MCF 10A (cell line): ENCODE measurements at regions of chr1 and their contacts with region 1.

Region 1: GRCh38 chr1:146036965-146037646 is 15.6 kb upstream of the HJV start:
- DNase-seq: peak; percentile 95
- H3K4me3 Mint-ChIP-seq: peak overlapping the region; percentile 99
- H3K27ac Mint-ChIP-seq: peak overlapping the region; percentile 98
- H3K4me1 Mint-ChIP-seq: peaks cover 11% of the 10 kb centered on the region
- H3K27me3 Mint-ChIP-seq: no peaks in the 10 kb centered on the region
- CTCF ChIP-seq: no peak

Region 2: GRCh38 chr1:145751491-145752037 is 285.5 kb before region 1 on chr1:
- CTCF ChIA-PET with region 1: no interaction called
- POLR2A ChIA-PET with region 1: no interaction called
- intact Hi-C with region 1: no loop called
- DNase-seq: peak; percentile 50
- H3K4me3 Mint-ChIP-seq: no peak overlapping the region
- H3K27ac Mint-ChIP-seq: peak overlapping the region; percentile 87
- H3K4me1 Mint-ChIP-seq: peaks cover 14% of the 10 kb centered on the region
- H3K27me3 Mint-ChIP-seq: no peaks in the 10 kb centered on the region
- CTCF ChIP-seq: no peak

Region 3: GRCh38 chr1:145918144-145918992 is 118.7 kb before region 1 on chr1 and contains the start of gene PEX11B:
- CTCF ChIA-PET with region 1: no interaction called
- POLR2A ChIA-PET with region 1: interaction called, 15 read pairs
- intact Hi-C with region 1: no loop called
- DNase-seq: peak; percentile 92
- H3K4me3 Mint-ChIP-seq: peak within 1 kb of the TSS; percentile 94
- H3K27ac Mint-ChIP-seq: peak within 1 kb of the TSS; percentile 99
- H3K4me1 Mint-ChIP-seq: peaks cover 43% of the 10 kb centered on the region
- H3K27me3 Mint-ChIP-seq: no peaks in the 10 kb centered on the region
- CTCF ChIP-seq: no peak
- total RNA-seq, gene PEX11B: 35.5 and 36.2 TPM in 2 replicates

Region 4: DNA sequence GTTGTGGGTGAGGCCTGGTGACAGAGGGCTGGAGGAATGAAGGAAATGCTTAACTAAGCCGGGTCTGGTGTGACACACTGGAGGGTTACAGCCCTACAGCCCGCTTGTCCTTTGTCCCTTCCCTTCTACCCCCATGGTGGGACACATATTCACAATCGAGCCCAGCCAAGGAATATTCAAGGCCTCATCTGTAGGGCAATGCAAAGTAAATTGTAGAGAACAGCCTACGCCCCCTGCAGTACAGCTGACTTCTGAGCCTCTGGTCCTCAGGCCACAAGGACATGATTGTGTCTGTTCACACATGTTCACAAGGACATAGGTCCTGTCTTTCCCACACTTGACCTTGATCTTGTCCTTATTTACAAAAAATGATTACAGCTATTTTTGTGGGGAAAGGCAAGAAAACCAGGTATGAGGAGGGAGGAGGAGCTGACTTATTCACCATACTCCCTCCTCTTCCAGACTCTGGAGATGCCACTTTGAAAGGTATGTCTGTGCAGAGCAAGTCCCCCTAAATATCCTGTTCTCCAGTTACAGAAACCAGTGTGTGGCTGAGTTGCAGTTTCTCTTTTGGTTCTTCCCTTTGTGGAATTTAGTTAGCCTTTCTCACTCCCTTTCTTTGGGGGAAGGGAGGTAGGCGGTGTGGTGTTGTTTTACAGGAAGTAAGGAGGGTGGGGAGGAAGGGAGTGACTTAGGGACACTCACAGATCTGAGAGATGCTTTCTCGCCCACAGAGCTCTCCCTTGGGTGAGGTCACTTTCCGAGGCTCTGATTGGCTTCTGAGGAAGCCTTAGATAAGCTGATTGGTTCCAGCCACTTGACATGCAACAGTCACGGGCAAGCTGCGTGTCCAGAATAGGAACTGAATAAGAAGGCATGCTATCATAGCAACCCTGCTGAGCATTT is 58.0 kb before region 1 on chr1:
- CTCF ChIA-PET with region 1: interaction called, 21 read pairs
- POLR2A ChIA-PET with region 1: interaction called, 61 read pairs
- intact Hi-C with region 1: no loop called
- DNase-seq: peak; percentile 100
- H3K4me3 Mint-ChIP-seq: no peak overlapping the region
- H3K27ac Mint-ChIP-seq: no peak overlapping the region
- H3K4me1 Mint-ChIP-seq: peaks cover 11% of the 10 kb centered on the region
- H3K27me3 Mint-ChIP-seq: no peaks in the 10 kb centered on the region
- CTCF ChIP-seq: peak; percentile 18

Region 5: GRCh38 chr1:146012737-146013403 is 24.2 kb before region 1 on chr1:
- CTCF ChIA-PET with region 1: interaction called, 70 read pairs
- POLR2A ChIA-PET with region 1: interaction called, 6 read pairs
- intact Hi-C with region 1: no loop called
- DNase-seq: peak; percentile 87
- H3K4me3 Mint-ChIP-seq: no peak overlapping the region
- H3K27ac Mint-ChIP-seq: no peak overlapping the region
- H3K4me1 Mint-ChIP-seq: peaks cover 9% of the 10 kb centered on the region
- H3K27me3 Mint-ChIP-seq: no peaks in the 10 kb centered on the region
- CTCF ChIP-seq: peak; percentile 89

Region 6: DNA sequence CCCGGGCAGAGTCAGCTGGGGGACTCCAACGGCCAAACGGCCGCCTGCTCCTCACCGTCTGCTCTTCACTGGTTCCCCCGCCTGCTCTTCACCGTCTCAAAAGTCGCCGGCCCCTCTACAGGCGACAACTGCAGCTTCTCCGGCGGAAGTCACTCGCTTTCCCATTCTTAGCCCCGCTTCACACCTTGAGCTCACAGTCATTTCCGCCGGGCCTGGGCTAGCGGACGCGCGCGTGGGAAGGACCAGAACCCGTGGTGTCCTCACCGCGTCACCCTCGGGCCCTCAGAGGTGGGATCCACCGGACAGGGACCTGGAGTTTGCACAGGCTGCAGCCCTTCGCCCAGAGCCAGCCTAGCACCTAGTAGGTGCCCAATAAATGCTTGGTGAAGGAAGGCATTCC is 12.3 kb after region 1 on chr1:
- CTCF ChIA-PET with region 1: interaction called, 12 read pairs
- POLR2A ChIA-PET with region 1: interaction called, 173 read pairs
- intact Hi-C with region 1: loop called (anchors 1 kb)
- DNase-seq: no peak
- H3K4me3 Mint-ChIP-seq: no peak overlapping the region
- H3K27ac Mint-ChIP-seq: no peak overlapping the region
- H3K4me1 Mint-ChIP-seq: peaks cover 11% of the 10 kb centered on the region
- H3K27me3 Mint-ChIP-seq: no peaks in the 10 kb centered on the region
- CTCF ChIP-seq: no peak